ENCODE measurements at regions of chr1 and their contacts with region 1.

Region 1: GRCh38 chr1:12124693-12125421 is 41.9 kb upstream of the TNFRSF1B start:
- DNase-seq: peak; percentile 66
- H3K4me3 Mint-ChIP-seq: no peak overlapping the region
- H3K27ac Mint-ChIP-seq: peak overlapping the region; percentile 55
- H3K4me1 Mint-ChIP-seq: peaks cover 33% of the 10 kb centered on the region
- H3K27me3 Mint-ChIP-seq: no peaks in the 10 kb centered on the region

Region 2: DNA sequence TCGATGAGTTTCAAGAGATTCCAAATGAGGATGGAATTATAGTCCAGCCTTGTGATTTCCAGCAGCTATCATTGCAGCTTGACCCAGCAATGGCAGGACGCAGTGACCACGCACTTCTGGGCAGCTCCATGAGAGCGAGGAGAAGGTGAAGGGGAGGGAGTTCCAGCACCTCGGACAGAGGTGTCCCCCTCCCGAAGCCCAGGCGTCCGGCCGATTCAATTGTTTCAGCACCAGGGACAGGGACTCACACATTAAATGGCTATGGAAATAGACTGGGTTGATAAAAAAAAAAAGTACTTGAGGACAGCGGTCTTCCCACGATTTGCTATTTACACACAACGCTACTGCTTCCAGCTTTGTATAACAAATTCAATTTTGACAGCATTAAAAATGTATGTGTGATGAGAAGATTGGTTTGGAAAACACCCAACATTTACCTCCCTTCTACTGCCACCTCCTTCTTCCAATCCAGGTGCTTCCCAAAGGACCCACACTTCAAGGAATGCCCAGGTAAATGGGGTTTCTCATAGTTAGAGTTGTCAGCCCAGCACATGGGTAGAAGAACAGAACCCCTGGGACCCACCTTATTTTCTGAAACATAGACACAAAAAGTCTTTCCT is 574.1 kb before region 1 on chr1:
- intact Hi-C with region 1: no loop called
- DNase-seq: peak; percentile 47
- H3K4me3 Mint-ChIP-seq: no peak overlapping the region
- H3K27ac Mint-ChIP-seq: no peak overlapping the region
- H3K4me1 Mint-ChIP-seq: no peaks in the 10 kb centered on the region
- H3K27me3 Mint-ChIP-seq: no peaks in the 10 kb centered on the region

Region 3: GRCh38 chr1:11805447-11806306 is 319.2 kb before region 1 on chr1 and contains the starts of genes CLCN6 and MTHFR:
- intact Hi-C with region 1: no loop called
- DNase-seq: peak; percentile 99
- H3K4me3 Mint-ChIP-seq: peak within 1 kb of the TSS; percentile 90
- H3K27ac Mint-ChIP-seq: peak within 1 kb of the TSS; percentile 88
- H3K4me1 Mint-ChIP-seq: peaks cover 56% of the 10 kb centered on the region
- H3K27me3 Mint-ChIP-seq: no peaks in the 10 kb centered on the region
- total RNA-seq, gene CLCN6: 18.8 and 18.9 TPM in 2 replicates
- total RNA-seq, gene MTHFR: 18.8 and 21.4 TPM in 2 replicates

Region 4: DNA sequence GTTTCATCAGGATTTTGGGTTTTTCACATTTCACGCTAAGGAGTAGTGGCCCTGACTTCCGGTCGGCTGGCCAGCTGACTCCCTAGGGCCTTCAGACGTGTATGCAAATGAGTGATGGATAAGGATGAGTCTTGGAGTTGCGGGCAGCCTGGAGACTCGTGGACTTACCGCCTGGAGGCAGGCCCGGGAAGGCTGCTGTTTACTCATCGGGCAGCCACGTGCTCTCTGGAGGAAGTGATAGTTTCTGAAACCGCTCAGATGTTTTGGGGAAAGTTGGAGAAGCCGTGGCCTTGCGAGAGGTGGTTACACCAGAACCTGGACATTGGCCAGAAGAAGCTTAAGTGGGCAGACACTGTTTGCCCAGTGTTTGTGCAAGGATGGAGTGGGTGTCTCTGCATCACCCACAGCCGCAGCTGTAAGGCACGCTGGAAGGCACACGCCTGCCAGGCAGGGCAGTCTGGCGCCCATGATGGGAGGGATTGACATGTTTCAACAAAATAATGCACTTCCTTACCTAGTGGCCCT is 18.8 kb after region 1 on chr1:
- intact Hi-C with region 1: no loop called
- DNase-seq: no peak
- H3K4me3 Mint-ChIP-seq: no peak overlapping the region
- H3K27ac Mint-ChIP-seq: peak overlapping the region; percentile 78
- H3K4me1 Mint-ChIP-seq: peaks cover 37% of the 10 kb centered on the region
- H3K27me3 Mint-ChIP-seq: no peaks in the 10 kb centered on the region

Region 5: DNA sequence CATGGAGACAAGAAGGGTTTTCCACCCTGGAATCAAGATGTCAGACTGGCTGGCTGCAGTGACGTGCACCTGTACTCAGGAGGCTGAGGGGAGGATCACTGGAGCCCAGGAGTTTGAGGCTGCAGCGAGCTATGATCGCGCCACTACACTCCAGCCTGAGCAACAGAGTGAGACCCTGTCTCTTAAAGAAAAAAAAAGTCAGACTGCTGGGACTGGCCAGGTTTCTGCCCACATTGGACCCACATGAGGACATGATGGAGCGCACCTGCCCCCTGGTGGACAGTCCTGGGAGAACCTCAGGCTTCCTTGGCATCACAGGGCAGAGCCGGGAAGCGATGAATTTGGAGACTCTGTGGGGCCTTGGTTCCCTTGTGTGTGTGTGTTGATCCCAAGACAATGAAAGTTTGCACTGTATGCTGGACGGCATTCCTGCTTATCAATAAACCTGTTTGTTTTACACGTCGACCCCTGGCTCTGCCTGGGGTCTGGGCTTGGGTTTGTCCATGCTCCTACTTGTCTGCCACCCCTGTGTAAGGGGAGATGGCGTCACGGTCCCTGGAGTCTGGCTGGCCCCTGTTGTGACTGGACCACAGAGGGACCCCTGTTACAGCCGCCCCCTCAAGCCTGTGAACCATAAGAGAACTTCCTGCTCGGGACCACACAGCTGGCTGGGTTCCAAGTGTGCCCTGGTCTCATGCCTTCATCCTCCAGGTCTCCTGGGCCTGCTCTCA is 84.1 kb after region 1 on chr1:
- intact Hi-C with region 1: loop called (anchors 1 kb)
- DNase-seq: peak; percentile 71
- H3K4me3 Mint-ChIP-seq: no peak overlapping the region
- H3K27ac Mint-ChIP-seq: peak overlapping the region; percentile 37
- H3K4me1 Mint-ChIP-seq: peaks cover 29% of the 10 kb centered on the region
- H3K27me3 Mint-ChIP-seq: peaks cover 2% of the 10 kb centered on the region

Region 6: DNA sequence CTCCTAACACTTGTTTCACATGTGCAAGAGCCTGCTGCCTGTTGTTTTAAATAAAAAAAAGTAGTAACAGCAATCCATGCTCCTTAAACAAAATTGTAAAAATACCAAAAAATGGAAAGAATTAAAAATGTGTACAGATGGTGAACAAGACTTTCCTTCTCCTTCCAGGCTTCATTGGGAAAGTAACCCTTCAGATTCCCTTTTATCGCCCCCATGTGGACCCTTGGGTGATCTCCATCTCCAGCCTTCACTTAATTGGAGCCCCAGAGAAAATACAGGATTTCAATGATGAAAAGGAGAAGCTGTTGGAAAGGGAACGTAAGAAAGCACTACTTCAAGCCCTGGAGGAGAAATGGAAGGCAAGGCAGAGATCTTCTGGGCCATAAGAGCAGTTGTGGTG is 119.2 kb after region 1 on chr1:
- intact Hi-C with region 1: loop called (anchors 1 kb)
- DNase-seq: no peak
- H3K4me3 Mint-ChIP-seq: no peak overlapping the region
- H3K27ac Mint-ChIP-seq: no peak overlapping the region
- H3K4me1 Mint-ChIP-seq: no peaks in the 10 kb centered on the region
- H3K27me3 Mint-ChIP-seq: no peaks in the 10 kb centered on the region